ENCODE measurements at regions of chr11 and their contacts with region 1.

Region 1: GRCh38 chr11:63974259-63975143 is at the start of gene COX8A:
- DNase-seq: peak; percentile 96
- H3K4me3 Mint-ChIP-seq: peak within 1 kb of the TSS; percentile 100
- H3K27ac Mint-ChIP-seq: peak within 1 kb of the TSS; percentile 97
- H3K4me1 Mint-ChIP-seq: peaks cover 17% of the 10 kb centered on the region
- H3K27me3 Mint-ChIP-seq: peaks cover 8% of the 10 kb centered on the region
- total RNA-seq, gene COX8A: 289 and 291 TPM in 2 replicates

Region 2: DNA sequence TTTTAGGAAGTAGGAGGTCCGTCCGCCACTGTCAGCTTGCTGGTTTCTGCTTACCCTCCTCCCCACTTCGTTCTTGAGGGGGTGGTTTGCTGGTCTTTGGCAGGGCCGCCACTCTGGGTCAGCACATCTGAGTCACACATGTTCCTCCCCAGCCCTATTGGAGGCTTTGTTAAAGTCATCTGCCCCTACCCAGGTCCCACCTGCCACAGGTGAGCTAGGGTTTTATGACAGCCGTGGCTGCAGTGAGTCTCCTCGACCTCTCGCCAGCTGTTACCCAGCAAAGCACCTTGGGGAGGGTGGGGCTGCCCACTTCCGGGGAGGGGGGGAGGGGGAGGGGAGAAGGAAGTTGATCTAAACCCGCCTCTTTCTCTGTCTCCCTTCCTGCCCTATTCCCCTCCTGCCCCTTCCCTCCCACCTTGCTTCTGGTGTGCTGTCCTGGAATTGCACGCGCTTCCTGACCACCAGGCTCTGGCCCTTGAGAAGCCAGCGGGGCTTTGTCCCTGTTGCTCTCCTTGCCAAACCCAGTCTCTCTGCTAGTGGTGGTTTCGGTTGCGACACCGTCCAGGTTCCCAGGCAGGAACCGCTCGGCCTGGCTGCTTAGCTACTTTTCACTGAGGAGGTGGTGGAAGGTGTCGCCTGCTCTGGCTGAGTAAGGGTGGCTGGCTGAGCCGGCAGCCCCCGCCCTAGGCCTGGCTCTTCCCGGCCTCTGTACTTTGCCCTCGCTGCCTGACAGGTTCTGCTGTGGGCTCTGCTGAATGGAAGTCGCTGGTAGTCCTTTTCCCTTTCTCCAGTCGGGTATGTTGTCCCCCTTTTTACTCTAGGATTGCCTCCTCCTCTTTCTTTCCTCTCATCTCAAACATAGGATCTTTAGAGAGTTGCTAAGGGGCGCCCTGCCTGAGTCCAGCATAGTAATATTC is 86.1 kb before region 1 on chr11:
- intact Hi-C with region 1: loop called (anchors 1 kb)
- DNase-seq: peak; percentile 57
- H3K4me3 Mint-ChIP-seq: peak overlapping the region; percentile 86
- H3K27ac Mint-ChIP-seq: peak overlapping the region; percentile 83
- H3K4me1 Mint-ChIP-seq: peaks cover 77% of the 10 kb centered on the region
- H3K27me3 Mint-ChIP-seq: no peaks in the 10 kb centered on the region

Region 3: DNA sequence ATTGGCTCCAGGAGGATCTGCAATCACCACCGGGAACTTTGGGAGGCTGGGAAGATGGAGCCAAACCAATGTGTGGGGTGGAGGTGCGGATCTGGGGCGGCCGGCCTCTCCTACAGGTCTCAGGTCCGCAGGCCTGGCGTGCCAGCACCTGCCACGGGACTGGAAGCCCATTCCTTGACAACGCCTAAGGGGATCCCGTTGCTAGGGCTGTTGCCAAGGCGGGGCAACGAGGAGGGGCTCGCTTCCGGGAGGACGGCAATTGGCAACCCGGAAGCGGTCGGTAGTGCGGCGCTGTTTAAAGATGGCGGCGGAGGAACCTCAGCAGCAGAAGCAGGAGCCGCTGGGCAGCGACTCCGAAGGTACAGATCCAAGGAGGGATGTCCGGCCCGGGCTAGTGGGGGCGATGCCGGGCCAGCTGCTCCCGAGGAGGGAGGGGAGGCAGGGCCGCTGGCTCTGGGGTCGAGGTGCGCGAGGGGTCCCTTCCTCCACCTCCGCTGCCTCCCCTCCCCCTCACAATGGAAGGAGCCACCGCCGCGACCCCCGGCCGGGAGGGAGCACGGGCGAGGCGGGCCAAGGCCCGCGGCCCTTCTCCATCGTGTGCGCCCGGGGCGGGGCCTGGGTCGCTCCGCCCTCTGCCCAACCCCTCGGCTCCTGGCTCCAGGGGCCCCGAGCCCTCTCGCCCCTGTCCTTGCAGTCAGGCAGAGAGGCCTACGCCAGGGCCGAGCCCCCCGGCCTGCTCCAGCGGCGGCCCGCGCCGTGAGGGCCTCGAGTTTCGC is 11.8 kb after region 1 on chr11 and contains the start of gene OTUB1:
- intact Hi-C with region 1: loop called (anchors 1 kb)
- DNase-seq: peak; percentile 86
- H3K4me3 Mint-ChIP-seq: peak within 1 kb of the TSS; percentile 97
- H3K27ac Mint-ChIP-seq: peak within 1 kb of the TSS; percentile 96
- H3K4me1 Mint-ChIP-seq: peaks cover 32% of the 10 kb centered on the region
- H3K27me3 Mint-ChIP-seq: no peaks in the 10 kb centered on the region
- total RNA-seq, gene OTUB1: 104 and 114 TPM in 2 replicates

Region 4: GRCh38 chr11:64225612-64226506 is 251.4 kb after region 1 on chr11 and contains the starts of genes NUDT22 and TRPT1:
- intact Hi-C with region 1: loop called (anchors 1 kb)
- DNase-seq: peak; percentile 92
- H3K4me3 Mint-ChIP-seq: peak within 1 kb of the TSS; percentile 87
- H3K27ac Mint-ChIP-seq: peak within 1 kb of the TSS; percentile 80
- H3K4me1 Mint-ChIP-seq: peaks cover 27% of the 10 kb centered on the region
- H3K27me3 Mint-ChIP-seq: no peaks in the 10 kb centered on the region
- total RNA-seq, gene NUDT22: 74.9 and 79.4 TPM in 2 replicates
- total RNA-seq, gene TRPT1: 30.3 and 35.5 TPM in 2 replicates

Region 5: GRCh38 chr11:64284048-64284961 is 309.8 kb after region 1 on chr11 and contains the start of gene BAD:
- intact Hi-C with region 1: loop called (anchors 10 kb)
- DNase-seq: peak; percentile 91
- H3K4me3 Mint-ChIP-seq: peak within 1 kb of the TSS; percentile 87
- H3K27ac Mint-ChIP-seq: peak within 1 kb of the TSS; percentile 95
- H3K4me1 Mint-ChIP-seq: peaks cover 30% of the 10 kb centered on the region
- H3K27me3 Mint-ChIP-seq: peaks cover 1% of the 10 kb centered on the region
- total RNA-seq, gene BAD: 30.1 and 38.0 TPM in 2 replicates